Activated B cell treated with CpG ODN at 0.5 μM for 24 hours (primary cell): ENCODE measurements at regions of chr6 and their contacts with region 1.

Region 1: GRCh38 chr6:135880066-135880972 is 28.8 kb downstream of the PDE7B start:
- DNase-seq: no peak
- ATAC-seq: peak; percentile 84
- H3K4me3 Mint-ChIP-seq: peak overlapping the region; percentile 80
- H3K27ac Mint-ChIP-seq: peak overlapping the region; percentile 98
- H3K4me1 Mint-ChIP-seq: peaks cover 46% of the 10 kb centered on the region
- H3K27me3 Mint-ChIP-seq: no peaks in the 10 kb centered on the region
- CTCF ChIP-seq: no peak

Region 2: DNA sequence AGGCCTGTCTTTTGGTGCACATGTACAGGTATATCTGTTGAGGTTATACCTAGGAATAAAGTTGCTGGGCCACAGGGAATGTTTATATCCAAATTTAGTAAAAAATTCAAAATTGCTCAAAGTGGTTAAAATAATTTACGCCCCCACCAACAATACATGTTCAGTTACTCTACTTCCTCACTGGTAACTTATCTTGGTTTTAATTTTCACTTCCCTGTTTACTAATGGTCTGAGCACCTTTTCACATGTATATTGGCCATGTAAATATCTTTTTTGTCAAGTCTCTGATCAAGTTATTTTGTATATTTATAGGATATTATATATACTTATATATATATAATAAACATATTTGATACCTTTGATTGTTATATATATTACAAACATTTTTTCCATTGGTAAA is 19.1 kb before region 1 on chr6:
- CTCF ChIA-PET with region 1: no interaction called
- POLR2A ChIA-PET with region 1: no interaction called
- intact Hi-C with region 1: loop called (anchors 1 kb)
- DNase-seq: no peak
- ATAC-seq: peak; percentile 78
- H3K4me3 Mint-ChIP-seq: no peak overlapping the region
- H3K27ac Mint-ChIP-seq: peak overlapping the region; percentile 50
- H3K4me1 Mint-ChIP-seq: peaks cover 15% of the 10 kb centered on the region
- H3K27me3 Mint-ChIP-seq: no peaks in the 10 kb centered on the region
- CTCF ChIP-seq: no peak